RWPE1 (cell line): ENCODE measurements at regions of chr3 and their contacts with region 1.

Region 1: GRCh38 chr3:168847291-168847883 is 751.7 kb upstream of the GOLIM4 start:
- DNase-seq: peak; percentile 26
- H3K27ac ChIP-seq: no peak overlapping the region
- CTCF ChIP-seq: peak; percentile 64

Region 2: DNA sequence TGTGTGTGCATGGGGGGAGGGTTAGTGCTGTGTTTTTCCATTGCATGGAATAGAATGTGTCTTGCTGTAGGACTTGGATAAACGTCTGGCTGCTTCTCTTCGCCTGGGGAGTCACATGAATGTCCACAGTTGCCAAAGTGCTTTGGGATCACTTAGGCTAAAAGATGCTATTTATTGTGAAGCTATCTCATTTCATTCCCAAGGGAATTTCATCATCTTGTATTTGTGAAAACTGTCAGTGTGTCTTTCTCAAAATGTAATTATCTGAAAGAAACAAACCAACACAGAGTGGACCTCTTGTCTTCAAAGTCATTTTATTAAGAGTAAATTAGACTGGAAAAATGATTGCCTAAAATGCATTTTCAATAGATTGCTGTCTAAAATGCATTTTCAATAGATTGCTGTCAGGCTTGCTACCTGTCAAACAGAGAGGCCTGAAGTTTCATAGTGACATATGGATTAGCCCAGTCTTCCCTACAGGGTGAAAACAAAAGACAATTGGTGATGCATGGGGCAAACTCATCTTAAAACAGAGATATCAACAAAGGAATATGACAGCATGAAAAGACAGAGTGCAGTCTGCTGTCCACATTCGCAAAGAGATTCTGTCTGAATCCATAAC is 634.6 kb before region 1 on chr3:
- CTCF ChIA-PET with region 1: interaction called, 18 read pairs
- POLR2A ChIA-PET with region 1: no interaction called
- DNase-seq: no peak
- H3K27ac ChIP-seq: no peak overlapping the region
- CTCF ChIP-seq: no peak

Region 3: GRCh38 chr3:168884353-168884903 is 37.0 kb after region 1 on chr3:
- CTCF ChIA-PET with region 1: no interaction called
- POLR2A ChIA-PET with region 1: no interaction called
- DNase-seq: peak; percentile 78
- H3K27ac ChIP-seq: no peak overlapping the region
- CTCF ChIP-seq: no peak